ENCODE measurements at regions of chr3 and their contacts with region 1.

Region 1: GRCh38 chr3:28700728-28701127 is 352.1 kb upstream of the AZI2 start:
- ATAC-seq: no peak
- H3K4me3 ChIP-seq: no peak overlapping the region
- H3K27ac ChIP-seq: no peak overlapping the region
- H3K4me1 ChIP-seq: peaks cover 12 to 16% of the 10 kb centered on the region in 2 donors

Region 2: DNA sequence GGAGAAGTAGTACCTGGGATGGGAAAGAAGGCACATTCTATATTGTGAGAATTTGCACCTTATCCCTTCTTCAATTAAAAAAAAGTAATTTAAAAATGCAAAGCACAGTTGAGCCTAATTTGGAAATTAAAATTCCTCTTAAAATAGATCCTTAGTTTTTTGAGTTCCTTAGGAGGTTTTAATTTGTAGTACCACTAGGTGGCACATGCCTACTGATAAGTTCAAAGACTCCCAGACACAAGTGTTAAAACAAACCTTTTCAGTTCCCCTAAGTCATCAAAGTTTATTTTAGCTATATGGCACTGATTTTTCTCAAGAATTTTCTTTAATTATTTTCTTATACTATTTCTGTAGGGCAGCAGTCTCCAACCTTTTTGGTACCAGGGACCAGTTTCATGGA is 224.5 kb before region 1 on chr3:
- in situ Hi-C with region 1: loop called in 1 of 9 experiments (anchors 25 kb)
- ATAC-seq: peak in 3 of 8 experiments; percentile 31 to 41 (median 38)
- H3K4me3 ChIP-seq: no peak overlapping the region
- H3K27ac ChIP-seq: no peak overlapping the region
- H3K4me1 ChIP-seq: no peaks in the 10 kb centered on the region

Region 3: DNA sequence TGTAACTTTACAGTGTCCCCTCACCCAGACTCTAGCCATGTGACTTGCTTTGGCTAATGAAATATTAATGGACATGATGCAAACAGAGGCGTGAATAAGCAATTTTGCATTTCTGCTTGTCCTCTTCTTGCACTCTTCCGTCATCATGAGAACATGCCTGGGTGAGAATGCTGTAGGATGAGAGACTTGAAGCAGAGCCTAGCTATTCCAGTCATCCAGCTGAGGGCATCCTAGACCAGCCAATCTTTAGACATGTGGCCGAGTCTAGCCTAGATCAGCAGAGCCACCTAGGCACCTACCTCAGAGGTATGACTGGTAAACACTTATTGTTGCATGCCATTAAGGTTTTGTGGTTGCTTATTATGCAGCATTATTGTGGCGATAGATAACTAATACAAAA is 98.4 kb after region 1 on chr3:
- in situ Hi-C with region 1: no loop called
- ATAC-seq: peak; percentile 37 to 97 (median 92)
- H3K4me3 ChIP-seq: no peak overlapping the region
- H3K27ac ChIP-seq: no peak overlapping the region
- H3K4me1 ChIP-seq: no peaks in the 10 kb centered on the region

Region 4: DNA sequence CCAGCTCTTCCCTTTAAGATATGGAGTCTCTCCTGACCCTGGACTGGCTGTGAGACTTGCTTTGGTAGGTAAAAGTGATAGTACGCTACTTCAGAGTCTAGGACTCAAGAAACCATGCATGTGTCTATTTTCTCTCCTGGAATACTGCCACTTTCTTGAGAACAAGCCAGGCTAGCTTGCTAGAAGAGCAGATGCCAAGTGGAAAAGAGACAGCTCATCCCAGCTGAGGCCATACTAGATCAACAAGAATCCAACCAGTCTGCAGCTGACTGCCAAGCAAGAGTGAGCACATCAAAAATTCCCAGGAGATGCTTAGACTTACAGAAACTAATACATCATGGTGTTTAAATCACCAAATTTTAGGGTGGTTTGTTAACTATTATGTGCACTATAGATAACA is 371.9 kb after region 1 on chr3:
- in situ Hi-C with region 1: no loop called
- ATAC-seq: no peak
- H3K4me3 ChIP-seq: no peak overlapping the region
- H3K27ac ChIP-seq: no peak overlapping the region
- H3K4me1 ChIP-seq: no peaks in the 10 kb centered on the region

Measured in motor neuron (in vitro differentiated cells).